ENCODE measurements at regions of chr17 and their contacts with region 1.

Region 1: GRCh38 chr17:40516581-40517285 is 15.3 kb upstream of the TNS4 start:
- DNase-seq: peak; percentile 93
- ATAC-seq: peak; percentile 79
- H3K4me3 Mint-ChIP-seq: peak overlapping the region; percentile 70
- H3K27ac Mint-ChIP-seq: peak overlapping the region; percentile 91
- H3K4me1 Mint-ChIP-seq: peaks cover 60% of the 10 kb centered on the region
- H3K27me3 Mint-ChIP-seq: peaks cover 21% of the 10 kb centered on the region

Region 2: GRCh38 chr17:40427002-40427491 is 89.7 kb before region 1 on chr17:
- CTCF ChIA-PET with region 1: interaction called, 12 read pairs
- DNase-seq: peak; percentile 67
- ATAC-seq: peak; percentile 89
- H3K4me3 Mint-ChIP-seq: no peak overlapping the region
- H3K27ac Mint-ChIP-seq: peak overlapping the region; percentile 41
- H3K4me1 Mint-ChIP-seq: peaks cover 32% of the 10 kb centered on the region
- H3K27me3 Mint-ChIP-seq: peaks cover 32% of the 10 kb centered on the region

Region 3: DNA sequence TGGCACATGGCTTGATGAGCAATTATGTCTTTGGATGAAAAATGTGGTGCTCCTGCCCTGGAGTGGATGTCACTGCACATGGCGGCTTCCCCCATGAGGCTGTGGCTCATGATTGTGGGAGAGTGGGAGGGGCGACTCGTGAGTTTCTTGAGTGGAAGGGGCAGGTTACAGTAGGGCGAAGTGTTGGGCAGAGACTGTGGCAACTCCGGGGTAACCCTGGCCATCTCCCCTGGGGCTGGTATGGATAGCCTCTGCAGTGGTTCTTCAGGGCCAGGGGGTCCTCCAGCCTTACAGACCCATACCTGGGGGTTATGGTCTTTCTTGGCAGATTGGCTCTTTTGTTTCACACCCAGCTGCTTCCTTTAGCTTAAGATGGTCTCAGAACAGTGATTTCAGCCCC is 14.0 kb before region 1 on chr17:
- CTCF ChIA-PET with region 1: no interaction called
- DNase-seq: no peak
- ATAC-seq: no peak
- H3K4me3 Mint-ChIP-seq: no peak overlapping the region
- H3K27ac Mint-ChIP-seq: no peak overlapping the region
- H3K4me1 Mint-ChIP-seq: no peaks in the 10 kb centered on the region
- H3K27me3 Mint-ChIP-seq: peaks cover 9% of the 10 kb centered on the region

Region 4: DNA sequence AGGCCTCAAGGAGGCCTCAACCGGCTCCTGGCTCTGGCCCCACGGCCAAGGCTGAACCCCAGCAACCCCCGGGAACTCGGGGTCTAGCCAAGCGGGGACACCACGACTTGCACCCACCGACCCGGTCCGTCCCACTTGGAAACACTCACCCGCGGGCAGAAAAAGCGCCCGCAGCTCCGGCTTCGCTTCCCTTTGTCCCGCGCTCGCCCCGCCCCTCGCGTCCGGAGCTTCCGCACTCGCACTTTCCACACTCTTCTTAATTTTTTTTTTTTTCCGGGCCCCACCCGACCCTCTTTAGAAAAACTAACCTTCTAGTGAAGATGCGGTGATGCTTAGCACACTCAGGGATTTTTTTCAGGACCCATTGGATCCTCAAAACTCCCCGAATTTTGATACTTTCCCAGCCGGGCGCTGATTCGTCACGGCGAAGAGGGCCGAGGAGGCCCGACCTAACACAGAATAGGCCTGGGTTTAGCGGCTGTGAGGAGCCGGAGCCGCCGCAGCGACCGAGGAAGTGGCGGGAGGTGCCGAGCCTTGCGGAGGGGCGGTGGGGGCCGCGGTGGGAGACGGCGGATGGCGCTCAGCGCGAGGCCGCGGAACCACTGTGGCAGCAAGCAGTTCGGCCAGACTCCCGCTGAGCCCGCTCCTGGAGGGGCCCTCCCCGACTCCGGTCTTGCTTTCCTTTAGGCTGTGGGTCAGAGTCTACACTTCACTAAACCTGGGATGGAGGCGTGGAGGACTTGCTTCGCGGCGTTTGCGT is 131.1 kb after region 1 on chr17 and contains the start of gene SMARCE1:
- CTCF ChIA-PET with region 1: no interaction called
- DNase-seq: peak; percentile 77
- ATAC-seq: peak; percentile 79
- H3K4me3 Mint-ChIP-seq: peak within 1 kb of the TSS; percentile 95
- H3K27ac Mint-ChIP-seq: peak within 1 kb of the TSS; percentile 96
- H3K4me1 Mint-ChIP-seq: peaks cover 39% of the 10 kb centered on the region
- H3K27me3 Mint-ChIP-seq: no peaks in the 10 kb centered on the region
- total RNA-seq, gene SMARCE1: 90.7 to 110 TPM

Measured in activated CD8-positive, alpha-beta memory T cell treated with anti-CD3 and anti-CD28 coated beads, Interleukin-2, amount 10 ng/mL, durations not matched to agents 7 days and 5 days (primary cell).